ENCODE measurements at regions of chr7 and their contacts with region 1.

Region 1: GRCh38 chr7:6323967-6324701 is 51.7 kb upstream of the CYTH3 start:
- DNase-seq: no peak
- ATAC-seq: no peak
- H3K4me3 ChIP-seq: no peak overlapping the region
- H3K4me3 Mint-ChIP-seq: no peak overlapping the region
- H3K27ac ChIP-seq: no peak overlapping the region
- H3K27ac Mint-ChIP-seq: no peak overlapping the region
- H3K4me1 ChIP-seq: peaks cover 3% of the 10 kb centered on the region
- H3K4me1 Mint-ChIP-seq: no peaks in the 10 kb centered on the region
- H3K27me3 ChIP-seq: no peaks in the 10 kb centered on the region
- H3K27me3 Mint-ChIP-seq: no peaks in the 10 kb centered on the region
- CTCF ChIP-seq: no peak

Region 2: GRCh38 chr7:5854738-5855137 is 469.4 kb before region 1 on chr7:
- CTCF ChIA-PET with region 1: no interaction called
- POLR2A ChIA-PET with region 1: no interaction called
- intact Hi-C with region 1: loop called (anchors 5 to 10 kb)
- DNase-seq: no peak
- ATAC-seq: no peak
- H3K4me3 ChIP-seq: no peak overlapping the region
- H3K4me3 Mint-ChIP-seq: no peak overlapping the region
- H3K27ac ChIP-seq: no peak overlapping the region
- H3K27ac Mint-ChIP-seq: no peak overlapping the region
- H3K4me1 ChIP-seq: peaks cover 28% of the 10 kb centered on the region
- H3K4me1 Mint-ChIP-seq: peaks cover 25% of the 10 kb centered on the region
- H3K27me3 ChIP-seq: no peaks in the 10 kb centered on the region
- H3K27me3 Mint-ChIP-seq: no peaks in the 10 kb centered on the region
- CTCF ChIP-seq: no peak

Region 3: DNA sequence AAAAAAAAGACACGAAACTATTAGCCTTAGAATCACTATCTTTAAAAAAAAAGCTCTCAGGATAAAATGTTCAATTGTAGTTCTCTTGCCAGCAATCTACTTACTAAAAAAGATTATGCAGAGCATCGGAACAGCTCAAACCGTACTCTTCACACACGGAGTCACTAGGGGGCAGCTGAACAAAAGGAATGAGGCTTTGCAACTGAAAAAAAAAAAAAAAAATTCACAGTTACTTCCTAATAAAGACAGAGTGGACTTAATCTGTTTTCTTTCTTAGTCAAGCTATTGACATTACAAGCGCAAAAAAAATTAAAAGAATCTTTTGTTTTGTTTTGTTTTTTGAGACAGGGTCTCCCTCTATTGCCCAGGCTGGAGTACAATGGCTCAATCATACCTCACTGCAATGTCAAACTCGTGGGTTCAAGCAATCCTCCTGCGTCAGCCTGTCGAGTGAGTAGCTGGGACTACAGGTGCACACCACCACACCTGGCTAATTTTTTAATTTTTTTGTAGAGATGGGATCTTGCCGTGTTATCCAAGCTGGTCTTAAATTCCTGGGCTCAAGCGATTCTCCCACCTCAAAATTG is 326.8 kb before region 1 on chr7:
- CTCF ChIA-PET with region 1: interaction called, 7 read pairs
- POLR2A ChIA-PET with region 1: no interaction called
- intact Hi-C with region 1: loop called (anchors 1 to 10 kb)
- DNase-seq: peak; percentile 26 to 80 (median 40)
- ATAC-seq: peak; percentile 74
- H3K4me3 ChIP-seq: no peak overlapping the region
- H3K4me3 Mint-ChIP-seq: no peak overlapping the region
- H3K27ac ChIP-seq: no peak overlapping the region
- H3K27ac Mint-ChIP-seq: no peak overlapping the region
- H3K4me1 ChIP-seq: no peaks in the 10 kb centered on the region
- H3K4me1 Mint-ChIP-seq: no peaks in the 10 kb centered on the region
- H3K27me3 ChIP-seq: no peaks in the 10 kb centered on the region
- H3K27me3 Mint-ChIP-seq: no peaks in the 10 kb centered on the region
- CTCF ChIP-seq: peak; percentile 80

Region 4: DNA sequence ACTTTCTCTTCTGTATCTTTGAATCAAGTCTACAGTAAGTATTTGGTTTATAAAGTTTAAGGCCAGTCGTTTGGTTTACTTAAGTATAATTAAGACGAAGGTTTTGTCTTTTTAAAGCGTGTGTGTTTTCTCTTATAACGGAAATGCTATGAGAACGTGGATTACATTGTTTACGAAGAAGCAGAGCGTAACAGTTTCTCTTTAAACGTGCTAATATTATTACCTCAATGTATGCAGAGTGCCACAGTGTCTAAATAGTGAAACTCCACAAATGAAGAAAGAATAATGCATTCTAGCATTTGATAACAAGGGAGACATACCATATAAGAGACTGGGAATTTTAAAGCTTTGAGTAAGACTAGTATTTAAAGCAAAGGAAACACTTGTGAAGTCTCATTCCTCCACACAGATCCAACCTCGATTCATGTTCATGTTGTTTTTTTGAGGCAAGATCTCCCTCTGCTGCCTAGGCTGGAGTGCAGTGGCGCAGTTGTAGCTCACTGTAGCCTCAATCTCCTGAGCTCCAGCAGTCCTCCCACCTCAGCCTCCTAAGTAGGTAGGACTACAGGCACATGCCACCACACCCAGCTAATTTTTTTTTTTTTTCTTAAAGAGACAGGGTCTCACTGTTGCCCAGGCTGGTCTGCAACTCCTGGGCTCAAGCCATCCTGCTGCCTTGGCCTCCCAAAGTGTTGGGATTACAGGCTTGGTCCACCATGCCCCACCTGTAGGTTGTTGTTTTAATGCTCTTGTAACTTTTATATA is 217.8 kb before region 1 on chr7:
- CTCF ChIA-PET with region 1: interaction called, 4 read pairs
- POLR2A ChIA-PET with region 1: no interaction called
- intact Hi-C with region 1: loop called in 1 of 2 experiments (anchors 2 kb)
- DNase-seq: peak in 13 of 14 experiments; percentile 7 to 77 (median 25)
- ATAC-seq: peak; percentile 4
- H3K4me3 ChIP-seq: peak overlapping the region; percentile 88
- H3K4me3 Mint-ChIP-seq: peak overlapping the region; percentile 91
- H3K27ac ChIP-seq: peak overlapping the region; percentile 73
- H3K27ac Mint-ChIP-seq: peak overlapping the region; percentile 90
- H3K4me1 ChIP-seq: peaks cover 16% of the 10 kb centered on the region
- H3K4me1 Mint-ChIP-seq: peaks cover 33% of the 10 kb centered on the region
- H3K27me3 ChIP-seq: no peaks in the 10 kb centered on the region
- H3K27me3 Mint-ChIP-seq: no peaks in the 10 kb centered on the region
- CTCF ChIP-seq: peak; percentile 22

Region 5: GRCh38 chr7:6160191-6160623 is 163.9 kb before region 1 on chr7:
- CTCF ChIA-PET with region 1: no interaction called
- POLR2A ChIA-PET with region 1: no interaction called
- intact Hi-C with region 1: loop called in 1 of 2 experiments (anchors 1 kb)
- DNase-seq: peak in 2 of 14 experiments; percentile 23 to 32
- ATAC-seq: no peak
- H3K4me3 ChIP-seq: no peak overlapping the region
- H3K4me3 Mint-ChIP-seq: no peak overlapping the region
- H3K27ac ChIP-seq: no peak overlapping the region
- H3K27ac Mint-ChIP-seq: no peak overlapping the region
- H3K4me1 ChIP-seq: peaks cover 5% of the 10 kb centered on the region
- H3K4me1 Mint-ChIP-seq: peaks cover 3% of the 10 kb centered on the region
- H3K27me3 ChIP-seq: no peaks in the 10 kb centered on the region
- H3K27me3 Mint-ChIP-seq: no peaks in the 10 kb centered on the region
- CTCF ChIP-seq: peak; percentile 21

Region 6: GRCh38 chr7:6359021-6359420 is 34.9 kb after region 1 on chr7:
- CTCF ChIA-PET with region 1: no interaction called
- POLR2A ChIA-PET with region 1: no interaction called
- intact Hi-C with region 1: no loop called
- DNase-seq: no peak
- ATAC-seq: no peak
- H3K4me3 ChIP-seq: no peak overlapping the region
- H3K4me3 Mint-ChIP-seq: no peak overlapping the region
- H3K27ac ChIP-seq: no peak overlapping the region
- H3K27ac Mint-ChIP-seq: no peak overlapping the region
- H3K4me1 ChIP-seq: no peaks in the 10 kb centered on the region
- H3K4me1 Mint-ChIP-seq: no peaks in the 10 kb centered on the region
- H3K27me3 ChIP-seq: no peaks in the 10 kb centered on the region
- H3K27me3 Mint-ChIP-seq: no peaks in the 10 kb centered on the region
- CTCF ChIP-seq: no peak